Panc1 (cell line): ENCODE measurements at regions of chr3 and their contacts with region 1.

Region 1: GRCh38 chr3:10047876-10048275 is 21.6 kb downstream of the FANCD2 start:
- DNase-seq: no peak
- ATAC-seq: no peak
- H3K4me3 ChIP-seq: no peak overlapping the region
- H3K27ac ChIP-seq: no peak overlapping the region
- H3K4me1 ChIP-seq: no peaks in the 10 kb centered on the region
- H3K27me3 ChIP-seq: no peaks in the 10 kb centered on the region
- CTCF ChIP-seq: no peak

Region 2: DNA sequence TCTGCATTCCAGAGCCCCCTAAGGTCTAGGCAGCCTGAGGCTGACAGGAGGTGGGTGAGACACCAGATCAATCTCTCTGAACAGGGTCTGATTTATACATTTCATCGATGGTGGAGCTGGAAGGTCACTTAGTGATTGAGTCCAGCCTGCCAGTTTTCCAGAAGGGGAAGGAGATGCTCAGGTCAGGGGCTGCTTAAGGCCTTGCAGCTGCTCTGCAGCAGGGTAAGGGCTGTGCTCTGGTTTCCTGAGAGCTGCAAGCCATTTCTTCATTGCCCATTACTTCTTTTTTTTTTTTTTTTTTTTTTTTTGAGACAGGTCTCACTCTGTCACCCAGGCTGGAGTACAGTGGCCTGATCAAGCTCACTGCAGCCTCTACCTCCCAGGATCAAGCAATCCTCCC is 266.3 kb before region 1 on chr3:
- CTCF ChIA-PET with region 1: no interaction called
- POLR2A ChIA-PET with region 1: interaction called, 12 read pairs
- in situ Hi-C with region 1: no loop called
- intact Hi-C with region 1: no loop called
- DNase-seq: no peak
- ATAC-seq: no peak
- H3K4me3 ChIP-seq: no peak overlapping the region
- H3K27ac ChIP-seq: no peak overlapping the region
- H3K4me1 ChIP-seq: no peaks in the 10 kb centered on the region
- H3K27me3 ChIP-seq: no peaks in the 10 kb centered on the region
- CTCF ChIP-seq: no peak

Region 3: GRCh38 chr3:9994086-9994844 is 53.6 kb before region 1 on chr3:
- CTCF ChIA-PET with region 1: no interaction called
- POLR2A ChIA-PET with region 1: no interaction called
- in situ Hi-C with region 1: no loop called
- intact Hi-C with region 1: no loop called
- DNase-seq: no peak
- ATAC-seq: no peak
- H3K4me3 ChIP-seq: no peak overlapping the region
- H3K27ac ChIP-seq: no peak overlapping the region
- H3K4me1 ChIP-seq: no peaks in the 10 kb centered on the region
- H3K27me3 ChIP-seq: no peaks in the 10 kb centered on the region
- CTCF ChIP-seq: no peak

Region 4: DNA sequence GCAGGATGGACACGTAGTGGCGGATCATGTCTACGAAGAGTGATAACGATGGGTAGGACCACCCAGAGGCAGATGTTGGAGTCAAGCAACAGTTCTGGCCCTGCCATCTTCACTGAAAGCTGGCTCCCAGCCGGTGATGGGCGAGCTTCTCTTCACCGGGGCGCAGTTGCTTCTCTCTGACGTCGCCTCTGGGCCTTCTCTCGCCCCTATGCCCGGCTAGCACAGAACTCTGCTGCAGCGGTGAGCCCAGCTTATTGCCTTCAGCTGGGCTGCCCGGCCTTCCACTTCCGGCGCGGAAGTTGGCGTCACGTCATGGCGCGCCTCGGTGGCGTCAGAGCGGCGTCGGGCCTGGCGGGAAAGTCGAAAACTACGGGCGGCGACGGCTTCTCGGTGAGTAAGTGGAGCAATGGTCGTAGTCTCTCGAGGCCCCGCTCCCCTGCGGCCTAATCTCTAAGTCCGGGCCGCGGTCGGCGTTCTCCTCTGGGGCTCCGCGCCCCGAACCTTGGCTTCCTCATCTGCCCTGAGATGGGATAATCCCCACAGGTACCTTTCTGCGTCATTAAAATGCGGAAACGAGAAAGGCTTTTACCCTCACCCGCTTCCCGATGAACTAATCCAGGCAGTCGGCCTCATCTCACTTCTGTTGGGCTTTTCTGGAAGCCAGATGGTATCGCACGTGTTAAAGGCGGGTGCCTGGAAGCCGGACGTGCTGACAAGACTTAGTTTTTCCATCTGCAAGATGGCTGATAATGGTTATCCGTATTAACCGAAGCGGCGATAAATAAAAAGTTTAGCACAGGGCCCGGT is 21.6 kb before region 1 on chr3 and contains the start of gene FANCD2:
- CTCF ChIA-PET with region 1: no interaction called
- POLR2A ChIA-PET with region 1: interaction called, 10 read pairs
- in situ Hi-C with region 1: no loop called
- intact Hi-C with region 1: no loop called
- DNase-seq: no peak
- ATAC-seq: peak; percentile 98
- H3K4me3 ChIP-seq: peak within 1 kb of the TSS; percentile 71 to 98
- H3K27ac ChIP-seq: peak within 1 kb of the TSS; percentile 87
- H3K4me1 ChIP-seq: peaks cover 6% of the 10 kb centered on the region; the same call in 1 of the 2 replicates
- H3K27me3 ChIP-seq: no peaks in the 10 kb centered on the region
- CTCF ChIP-seq: no peak
- total RNA-seq, gene FANCD2: 20.0 TPM